CD4-positive, alpha-beta T cell (primary cell): ENCODE measurements at regions of chr12 and their contacts with region 1.

Region 1: GRCh38 chr12:111330800-111331752 is 37.8 kb downstream of the PHETA1 start:
- DNase-seq: peak in 3 of 14 experiments; percentile 24 to 41 (median 31)
- ATAC-seq: no peak
- H3K4me3 ChIP-seq: no peak overlapping the region
- H3K4me3 Mint-ChIP-seq: no peak overlapping the region
- H3K27ac ChIP-seq: no peak overlapping the region
- H3K27ac Mint-ChIP-seq: no peak overlapping the region
- H3K4me1 ChIP-seq: peaks cover 4% of the 10 kb centered on the region
- H3K4me1 Mint-ChIP-seq: no peaks in the 10 kb centered on the region
- H3K27me3 ChIP-seq: peaks cover 0 to 5% of the 10 kb centered on the region in 2 experiments
- H3K27me3 Mint-ChIP-seq: peaks cover 8% of the 10 kb centered on the region
- CTCF ChIP-seq: peak; percentile 32

Region 2: GRCh38 chr12:111405149-111405860 is 74.2 kb after region 1 on chr12:
- CTCF ChIA-PET with region 1: no interaction called
- POLR2A ChIA-PET with region 1: no interaction called
- intact Hi-C with region 1: no loop called
- DNase-seq: peak; percentile 96 to 100 (median 99)
- ATAC-seq: peak; percentile 78
- H3K4me3 ChIP-seq: peak overlapping the region; percentile 63
- H3K4me3 Mint-ChIP-seq: peak overlapping the region; percentile 89
- H3K27ac ChIP-seq: peak overlapping the region; percentile 75 to 98
- H3K27ac Mint-ChIP-seq: peak overlapping the region; percentile 72
- H3K4me1 ChIP-seq: peaks cover 68% of the 10 kb centered on the region
- H3K4me1 Mint-ChIP-seq: peaks cover 62% of the 10 kb centered on the region
- H3K27me3 ChIP-seq: no peaks in the 10 kb centered on the region
- H3K27me3 Mint-ChIP-seq: no peaks in the 10 kb centered on the region
- CTCF ChIP-seq: peak; percentile 74

Region 3: GRCh38 chr12:111529424-111530368 is 198.6 kb after region 1 on chr12:
- CTCF ChIA-PET with region 1: no interaction called
- POLR2A ChIA-PET with region 1: no interaction called
- intact Hi-C with region 1: loop called in 1 of 2 experiments (anchors 2 kb)
- DNase-seq: peak; percentile 32 to 82 (median 46)
- ATAC-seq: peak; percentile 61
- H3K4me3 ChIP-seq: no peak overlapping the region
- H3K4me3 Mint-ChIP-seq: no peak overlapping the region
- H3K27ac ChIP-seq: no peak overlapping the region
- H3K27ac Mint-ChIP-seq: no peak overlapping the region
- H3K4me1 ChIP-seq: no peaks in the 10 kb centered on the region
- H3K4me1 Mint-ChIP-seq: no peaks in the 10 kb centered on the region
- H3K27me3 ChIP-seq: no peaks in the 10 kb centered on the region
- H3K27me3 Mint-ChIP-seq: no peaks in the 10 kb centered on the region
- CTCF ChIP-seq: peak; percentile 89